WTC11 (cell line): ENCODE measurements at regions of chr21 and their contacts with region 1.

Region 1: GRCh38 chr21:30340441-30341241 is 3.1 kb upstream of the KRTAP27-1 start:
- DNase-seq: peak; percentile 58
- ATAC-seq: peak; percentile 70
- H3K4me3 Mint-ChIP-seq: no peak overlapping the region
- H3K27ac Mint-ChIP-seq: no peak overlapping the region
- H3K4me1 Mint-ChIP-seq: no peaks in the 10 kb centered on the region
- H3K27me3 Mint-ChIP-seq: no peaks in the 10 kb centered on the region
- CTCF ChIP-seq: peak; percentile 82

Region 2: DNA sequence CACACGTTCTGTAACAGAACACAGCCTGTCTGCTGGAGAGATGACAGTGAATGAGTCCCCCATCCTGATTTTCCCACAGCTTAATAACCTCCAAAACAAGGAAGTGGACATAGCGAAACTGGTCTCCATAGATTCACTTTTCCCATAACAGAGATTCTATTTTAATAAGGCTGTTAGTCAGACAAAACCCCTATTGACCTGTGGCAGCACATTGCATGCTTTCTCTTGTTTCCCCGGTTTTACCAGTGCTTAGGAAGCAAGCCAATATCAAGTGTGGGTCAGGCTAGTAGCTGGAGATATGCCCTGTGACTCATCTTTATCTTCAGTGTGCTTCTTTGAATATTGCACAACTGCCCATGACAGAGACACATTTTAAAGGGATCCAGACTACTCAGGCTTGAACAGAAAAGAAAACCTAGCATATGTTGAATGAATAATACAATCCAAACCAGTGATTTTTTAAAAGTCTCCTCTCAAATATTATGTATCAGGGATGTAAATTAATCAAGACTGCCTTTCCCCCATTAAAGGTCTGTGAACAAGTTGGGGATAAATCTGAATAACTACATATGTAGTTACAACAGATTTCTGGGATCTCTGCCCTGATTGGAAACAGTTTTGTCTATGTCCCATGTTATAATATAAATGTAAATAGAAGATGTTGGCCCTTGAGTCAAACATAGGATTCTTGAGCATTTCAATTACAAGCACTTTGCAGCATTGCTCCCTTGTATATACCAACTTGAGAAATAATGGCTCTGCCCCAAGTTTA is 112.8 kb before region 1 on chr21:
- CTCF ChIA-PET with region 1: no interaction called
- POLR2A ChIA-PET with region 1: no interaction called
- DNase-seq: no peak
- ATAC-seq: no peak
- H3K4me3 Mint-ChIP-seq: no peak overlapping the region
- H3K27ac Mint-ChIP-seq: no peak overlapping the region
- H3K4me1 Mint-ChIP-seq: no peaks in the 10 kb centered on the region; the same call in 1 of the 2 replicates
- H3K27me3 Mint-ChIP-seq: no peaks in the 10 kb centered on the region
- CTCF ChIP-seq: no peak

Region 3: DNA sequence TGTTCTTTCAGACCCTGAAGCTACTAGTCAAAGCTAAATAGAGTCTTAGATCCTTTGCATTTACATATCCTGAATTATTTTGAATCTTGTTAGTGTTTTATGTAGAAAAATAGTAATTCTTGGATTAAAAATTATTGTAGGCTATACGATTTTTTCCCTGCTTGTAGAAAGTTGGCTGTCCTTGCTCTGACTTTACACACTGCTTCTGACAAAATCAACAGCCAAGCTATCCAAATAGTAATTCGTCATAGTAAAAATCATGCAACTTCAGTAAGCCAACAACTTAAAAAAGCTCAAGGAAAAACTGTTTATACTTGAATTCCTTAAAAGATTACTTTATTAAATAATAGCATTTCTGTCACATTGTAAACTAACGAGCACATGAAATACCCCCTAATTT is 15.3 kb after region 1 on chr21:
- CTCF ChIA-PET with region 1: no interaction called
- POLR2A ChIA-PET with region 1: no interaction called
- DNase-seq: no peak
- ATAC-seq: no peak
- H3K4me3 Mint-ChIP-seq: no peak overlapping the region
- H3K27ac Mint-ChIP-seq: no peak overlapping the region
- H3K4me1 Mint-ChIP-seq: no peaks in the 10 kb centered on the region
- H3K27me3 Mint-ChIP-seq: no peaks in the 10 kb centered on the region
- CTCF ChIP-seq: no peak

Region 4: GRCh38 chr21:30434033-30434631 is 93.5 kb after region 1 on chr21:
- CTCF ChIA-PET with region 1: interaction called, 15 read pairs
- POLR2A ChIA-PET with region 1: no interaction called
- DNase-seq: peak; percentile 64
- ATAC-seq: peak; percentile 98
- H3K4me3 Mint-ChIP-seq: no peak overlapping the region
- H3K27ac Mint-ChIP-seq: no peak overlapping the region
- H3K4me1 Mint-ChIP-seq: peaks cover 14% of the 10 kb centered on the region
- H3K27me3 Mint-ChIP-seq: no peaks in the 10 kb centered on the region
- CTCF ChIP-seq: peak; percentile 36; the same call in 1 of the 2 replicates

Region 5: GRCh38 chr21:30463713-30464112 is 123.1 kb after region 1 on chr21:
- CTCF ChIA-PET with region 1: interaction called, 19 read pairs
- POLR2A ChIA-PET with region 1: no interaction called
- DNase-seq: no peak
- ATAC-seq: peak; percentile 38; the same call in 1 of the 2 replicates
- H3K4me3 Mint-ChIP-seq: no peak overlapping the region
- H3K27ac Mint-ChIP-seq: no peak overlapping the region
- H3K4me1 Mint-ChIP-seq: no peaks in the 10 kb centered on the region
- H3K27me3 Mint-ChIP-seq: no peaks in the 10 kb centered on the region
- CTCF ChIP-seq: peak; percentile 66